ENCODE measurements at regions of chr19 and their contacts with region 1.

Region 1: GRCh38 chr19:30870876-30871275 is 478.4 kb downstream of the TSHZ3 start:
- DNase-seq: no peak
- H3K4me3 Mint-ChIP-seq: no peak overlapping the region
- H3K27ac Mint-ChIP-seq: no peak overlapping the region
- H3K4me1 Mint-ChIP-seq: no peaks in the 10 kb centered on the region
- H3K27me3 Mint-ChIP-seq: no peaks in the 10 kb centered on the region
- CTCF ChIP-seq: no peak

Region 2: GRCh38 chr19:30529876-30530275 is 341.0 kb before region 1 on chr19:
- CTCF ChIA-PET with region 1: interaction called, 11 read pairs
- intact Hi-C with region 1: no loop called
- DNase-seq: no peak
- H3K4me3 Mint-ChIP-seq: no peak overlapping the region
- H3K27ac Mint-ChIP-seq: no peak overlapping the region
- H3K4me1 Mint-ChIP-seq: no peaks in the 10 kb centered on the region
- H3K27me3 Mint-ChIP-seq: no peaks in the 10 kb centered on the region
- CTCF ChIP-seq: no peak

Region 3: DNA sequence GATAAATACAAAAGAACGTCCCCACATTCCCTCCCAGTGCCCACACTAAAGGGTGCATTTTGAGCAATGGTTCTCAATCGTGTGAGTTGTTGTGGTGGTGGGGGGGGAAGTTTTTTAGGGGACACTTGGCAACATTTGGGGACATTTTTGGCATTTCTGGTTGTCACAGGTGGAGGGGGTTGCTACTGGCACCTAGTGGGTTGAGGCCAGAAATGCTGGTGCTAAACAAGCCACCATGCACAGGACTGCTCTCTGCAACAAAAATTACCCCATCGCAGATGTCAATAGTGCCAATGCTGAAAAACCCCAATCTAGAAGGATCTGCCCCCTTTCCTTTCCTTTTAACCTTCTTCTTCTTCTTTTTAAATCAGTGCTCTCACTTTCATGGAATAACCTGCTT is 25.1 kb after region 1 on chr19:
- CTCF ChIA-PET with region 1: no interaction called
- intact Hi-C with region 1: no loop called
- DNase-seq: no peak
- H3K4me3 Mint-ChIP-seq: no peak overlapping the region
- H3K27ac Mint-ChIP-seq: no peak overlapping the region
- H3K4me1 Mint-ChIP-seq: no peaks in the 10 kb centered on the region
- H3K27me3 Mint-ChIP-seq: no peaks in the 10 kb centered on the region
- CTCF ChIP-seq: no peak

Region 4: DNA sequence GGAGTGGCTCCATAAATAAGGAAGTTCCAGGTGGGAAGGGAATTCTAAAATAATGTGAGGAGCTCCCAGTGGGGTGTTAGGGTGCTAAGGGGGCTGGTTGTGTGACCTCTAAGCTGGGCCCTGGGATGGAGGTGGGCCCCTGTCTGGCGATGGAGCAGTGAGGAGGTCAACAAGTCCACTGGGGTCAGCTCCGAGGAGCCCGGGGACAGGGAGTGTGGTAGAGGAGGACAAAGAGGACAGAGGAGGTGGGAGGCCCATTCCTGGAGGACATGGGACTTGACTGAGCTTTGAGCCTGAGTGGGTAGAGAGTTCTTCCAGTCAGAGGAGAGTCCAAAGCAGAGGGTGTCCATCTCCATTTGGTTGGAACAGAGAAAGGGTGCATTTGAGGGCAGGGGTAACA is 88.1 kb after region 1 on chr19:
- CTCF ChIA-PET with region 1: no interaction called
- intact Hi-C with region 1: no loop called
- DNase-seq: no peak
- H3K4me3 Mint-ChIP-seq: no peak overlapping the region
- H3K27ac Mint-ChIP-seq: no peak overlapping the region
- H3K4me1 Mint-ChIP-seq: no peaks in the 10 kb centered on the region
- H3K27me3 Mint-ChIP-seq: no peaks in the 10 kb centered on the region
- CTCF ChIP-seq: no peak

Measured in Calu3 (cell line).